ENCODE measurements at regions of chr11 and their contacts with region 1.

Region 1: DNA sequence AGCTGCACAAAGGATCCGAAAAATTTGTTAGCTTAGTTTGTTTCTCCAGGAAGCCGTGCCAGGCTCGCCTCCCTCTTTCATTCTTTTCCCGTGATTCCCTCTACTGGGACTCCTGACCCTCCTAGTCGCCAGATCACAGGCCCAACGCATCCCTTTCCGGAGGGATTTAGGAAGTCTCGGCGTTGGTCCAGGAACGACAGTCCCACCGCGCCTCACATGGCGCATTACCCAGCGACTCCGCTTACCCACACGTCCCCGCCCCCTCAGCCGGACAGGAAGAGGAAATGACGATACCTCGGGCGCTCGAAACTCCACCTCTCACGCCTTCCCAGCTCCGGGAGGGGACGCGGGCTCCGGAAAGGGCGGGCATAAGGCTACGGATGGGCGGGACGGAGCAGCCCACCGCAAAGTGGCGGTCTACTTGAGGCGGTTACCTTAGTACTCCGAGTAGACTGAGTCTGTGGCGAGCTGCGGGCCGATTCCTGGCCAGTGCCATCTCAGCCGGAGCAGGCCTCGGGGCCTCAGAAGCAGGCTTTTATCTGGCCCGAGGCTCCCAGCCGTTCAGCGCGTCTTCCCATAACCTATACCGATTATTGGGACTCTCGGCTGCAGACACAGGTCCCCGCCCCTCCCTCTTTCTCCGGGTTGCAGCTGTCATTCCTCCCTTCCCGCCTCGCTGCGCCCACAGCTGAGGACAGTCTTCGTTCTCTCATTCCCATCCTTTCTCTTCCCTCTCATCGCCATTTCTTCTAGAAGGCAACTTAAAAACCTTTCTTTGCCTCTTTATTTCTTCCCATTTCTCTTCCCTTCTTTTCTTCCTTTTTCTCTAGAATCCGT is at the start of gene CCDC15:
- DNase-seq: peak; percentile 97 to 99
- H3K4me3 ChIP-seq: peak within 1 kb of the TSS; percentile 60 to 78 (median 75)
- H3K27ac ChIP-seq: peak within 1 kb of the TSS; percentile 78 to 89 (median 82)
- H3K4me1 ChIP-seq: peaks cover 7 to 16% (median 11%) of the 10 kb centered on the region in 4 donors
- H3K27me3 ChIP-seq: no peaks in the 10 kb centered on the region
- CTCF ChIP-seq: peak in 1 of 7 experiments; percentile 5
- EP300 ChIP-seq: no peak
- POLR2A ChIP-seq: peak in 2 of 4 donors; percentile 71 to 72
- total RNA-seq, gene CCDC15: 0.43 to 15.6 (median 1.8) TPM

Region 2: DNA sequence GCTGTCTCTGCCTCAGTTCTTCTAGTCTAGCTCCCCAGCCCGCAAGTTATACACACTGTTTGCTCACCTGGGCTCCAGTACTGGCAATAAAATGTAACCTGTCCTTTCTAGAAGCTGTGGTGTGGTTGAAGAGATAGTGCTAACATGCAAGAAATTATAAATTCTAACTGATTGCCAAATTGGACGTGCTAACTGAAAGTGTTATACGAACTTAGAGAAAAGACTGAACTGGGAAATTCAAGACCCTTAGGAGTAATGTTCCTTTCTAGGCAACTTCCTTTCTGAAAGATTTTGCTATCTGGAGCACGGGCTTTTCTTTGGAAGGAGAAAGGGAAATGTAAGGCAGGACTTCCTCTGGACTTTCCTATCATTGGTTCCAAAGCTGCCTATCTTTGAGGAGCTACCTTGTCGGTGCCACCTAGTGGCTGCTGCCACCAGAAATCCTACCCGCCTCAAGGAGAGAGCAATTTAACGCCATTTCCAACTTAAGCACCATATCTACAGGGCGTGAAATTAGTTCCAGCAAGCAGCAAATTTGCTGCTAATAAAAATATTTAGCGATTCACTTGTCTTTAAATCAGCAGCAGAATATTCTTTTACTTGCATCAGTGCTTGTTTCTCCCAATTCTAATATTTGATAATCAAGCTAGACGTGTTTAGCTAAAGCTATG is 170.1 kb after region 1 on chr11:
- intact Hi-C with region 1: loop called (anchors 10 kb)
- DNase-seq: peak; percentile 67 to 74
- H3K4me3 ChIP-seq: peak overlapping the region in 2 of 4 donors; percentile 9 to 33
- H3K27ac ChIP-seq: peak overlapping the region; percentile 40 to 80 (median 52)
- H3K4me1 ChIP-seq: peaks cover 0 to 12% (median 9%) of the 10 kb centered on the region in 4 donors
- H3K27me3 ChIP-seq: peaks cover 0 to 12% (median 10%) of the 10 kb centered on the region in 3 donors
- CTCF ChIP-seq: peak in 5 of 7 experiments; percentile 19 to 65 (median 48)
- EP300 ChIP-seq: no peak
- POLR2A ChIP-seq: no peak